PC-9 (cell line): ENCODE measurements at regions of chr2 and their contacts with region 1.

Region 1: DNA sequence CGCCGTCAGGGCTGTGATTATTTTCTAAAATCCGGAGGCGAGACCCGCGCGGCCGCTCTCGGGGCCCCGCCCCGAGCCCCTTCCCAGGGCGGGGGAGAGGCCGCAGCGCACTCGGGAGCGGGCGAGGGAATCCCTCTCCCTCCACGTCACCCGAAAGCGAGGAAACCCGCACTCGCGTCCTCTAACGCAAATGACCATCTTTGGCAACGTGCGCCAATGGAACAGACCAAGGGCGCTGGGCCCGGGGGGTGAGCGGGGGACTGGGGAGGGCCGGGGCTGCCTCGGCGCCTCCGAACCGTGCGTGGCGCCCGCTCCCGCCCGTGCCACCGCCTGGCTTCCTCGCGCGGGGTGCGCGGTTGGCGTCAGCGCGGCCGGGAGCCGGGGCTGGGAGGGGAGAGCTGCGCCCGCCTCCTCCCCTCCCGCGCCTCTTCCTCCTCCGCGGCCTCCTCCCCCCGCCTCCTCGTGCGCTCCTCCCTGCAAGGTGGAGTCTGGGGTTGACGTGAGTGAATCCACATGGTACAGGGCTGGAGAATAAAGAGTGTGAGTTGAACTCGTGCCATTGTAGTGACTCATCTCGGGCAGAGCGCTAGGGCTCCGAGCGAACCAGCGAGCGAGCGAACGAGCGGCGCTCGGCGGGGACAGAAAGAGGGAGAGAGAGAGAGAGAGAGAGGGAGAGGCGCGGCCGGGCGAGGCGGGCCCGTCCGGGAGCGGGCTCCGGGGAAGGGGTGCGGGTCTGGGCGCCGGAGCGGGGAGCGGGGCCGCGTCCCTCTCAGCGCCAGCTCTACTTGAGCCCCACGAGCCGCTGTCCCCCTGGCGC is at the start of gene FOSL2:
- DNase-seq: peak; percentile 96 to 98
- H3K4me3 ChIP-seq: peak within 1 kb of the TSS; percentile 88
- H3K27ac ChIP-seq: peak within 1 kb of the TSS; percentile 96
- H3K4me1 ChIP-seq: peaks cover 36% of the 10 kb centered on the region
- H3K27me3 ChIP-seq: no peaks in the 10 kb centered on the region
- CTCF ChIP-seq: no peak
- total RNA-seq, gene FOSL2: 46.0 and 60.0 TPM in 2 replicates

Region 2: DNA sequence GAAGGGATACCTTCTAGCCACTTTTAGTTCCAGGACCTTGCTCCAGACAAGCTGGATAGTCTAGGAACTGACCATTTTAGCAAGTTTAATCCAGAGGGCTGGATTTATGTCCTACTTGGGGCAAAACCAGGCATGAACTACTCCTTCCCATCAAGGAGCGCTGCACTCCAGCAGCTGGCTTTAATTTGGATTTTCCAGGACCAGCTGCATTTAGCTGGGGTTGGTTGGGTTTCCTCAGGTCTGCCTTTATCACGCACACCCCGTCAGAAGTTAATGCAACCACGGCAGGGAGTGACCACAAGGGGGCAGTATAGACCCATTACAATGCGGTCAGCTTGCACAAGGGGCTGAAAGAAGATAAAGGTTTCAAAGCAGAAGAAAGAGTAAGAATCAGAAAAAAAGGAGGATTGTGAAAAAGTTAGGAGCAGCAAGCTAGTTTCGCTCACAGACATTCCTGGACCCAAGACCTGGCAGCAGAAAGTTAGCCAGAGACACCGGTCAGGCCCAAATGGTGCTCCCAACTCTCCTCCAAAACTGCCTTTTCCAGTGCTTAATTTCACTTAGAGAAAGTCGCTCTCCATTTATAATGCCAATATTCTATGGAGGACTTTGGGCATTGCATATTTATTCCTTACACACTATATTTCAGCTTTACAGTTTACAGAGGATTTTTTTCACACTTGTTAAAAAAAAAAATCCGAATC is 688.7 kb before region 1 on chr2:
- CTCF ChIA-PET with region 1: interaction called, 8 read pairs
- POLR2A ChIA-PET with region 1: interaction called, 4 read pairs
- intact Hi-C with region 1: loop called (anchors 1 kb)
- DNase-seq: peak; percentile 73 to 80
- H3K4me3 ChIP-seq: no peak overlapping the region
- H3K27ac ChIP-seq: peak overlapping the region; percentile 98
- H3K4me1 ChIP-seq: peaks cover 53% of the 10 kb centered on the region
- H3K27me3 ChIP-seq: no peaks in the 10 kb centered on the region
- CTCF ChIP-seq: peak; percentile 95

Region 3: DNA sequence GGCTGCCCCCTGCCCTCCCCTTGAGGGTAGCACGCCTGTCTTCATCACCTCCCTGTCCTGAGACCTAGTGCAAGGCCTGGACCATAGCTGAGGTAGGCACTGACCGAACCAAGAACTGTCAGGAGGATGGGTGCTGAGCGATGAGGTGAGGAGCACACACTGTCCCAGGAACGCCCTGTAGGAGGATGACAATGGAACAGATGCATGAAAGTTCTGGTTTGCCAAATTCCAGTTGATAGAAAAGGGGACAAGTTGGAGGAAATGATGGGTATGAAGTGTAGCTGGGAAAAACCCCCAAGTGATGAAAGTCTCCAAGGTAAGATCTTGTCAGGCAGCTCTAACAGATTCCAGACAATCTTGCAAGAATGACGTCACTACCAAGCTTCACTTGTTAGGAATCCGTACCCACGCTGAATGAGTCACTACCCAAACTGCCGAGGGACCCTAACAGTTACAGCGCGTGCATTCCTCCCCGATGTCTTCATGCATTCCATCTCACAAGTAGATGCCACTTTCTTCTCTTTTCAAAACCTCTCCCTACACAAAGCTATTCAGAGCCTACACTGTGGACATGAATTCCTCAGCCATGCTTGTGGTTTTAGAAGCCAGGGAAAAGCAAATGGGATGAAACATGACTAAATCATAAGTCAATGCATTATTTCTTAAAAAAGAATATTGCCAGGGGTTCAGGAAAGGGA is 593.4 kb before region 1 on chr2:
- CTCF ChIA-PET with region 1: no interaction called
- POLR2A ChIA-PET with region 1: no interaction called
- intact Hi-C with region 1: loop called (anchors 1 kb)
- DNase-seq: peak; percentile 89 to 100
- H3K4me3 ChIP-seq: peak overlapping the region; percentile 3; the same call in 1 of the 2 replicates
- H3K27ac ChIP-seq: peak overlapping the region; percentile 94
- H3K4me1 ChIP-seq: peaks cover 40% of the 10 kb centered on the region
- H3K27me3 ChIP-seq: no peaks in the 10 kb centered on the region
- CTCF ChIP-seq: no peak

Region 4: DNA sequence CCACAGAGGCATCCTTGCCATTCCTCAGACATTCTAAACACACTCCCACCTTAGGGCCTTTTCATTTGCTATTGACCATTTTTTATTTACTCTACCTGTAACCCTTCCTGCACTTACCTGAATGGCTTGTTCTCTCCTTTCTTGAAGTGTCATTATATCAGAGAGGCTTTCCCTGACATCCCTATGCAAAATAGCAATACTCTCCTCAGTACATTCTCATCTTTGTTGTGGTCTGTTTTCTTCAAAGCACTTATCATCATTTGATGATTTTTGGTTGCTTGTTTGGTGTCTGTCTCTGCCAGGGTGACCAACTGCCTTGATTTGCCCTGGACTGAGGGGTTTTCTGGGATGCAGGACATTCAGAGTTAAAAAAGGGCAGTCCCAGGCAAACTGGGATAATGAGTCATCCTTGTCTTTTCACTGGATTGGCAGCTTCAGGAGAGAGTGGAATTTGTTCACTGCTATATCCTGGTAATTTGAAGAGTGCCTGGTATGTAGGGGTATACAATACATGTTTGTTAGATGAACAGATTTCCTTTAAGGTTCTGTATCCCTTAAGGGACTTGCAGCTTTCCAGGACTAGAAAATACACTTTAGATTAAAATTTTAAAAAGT is 399.6 kb before region 1 on chr2:
- CTCF ChIA-PET with region 1: no interaction called
- POLR2A ChIA-PET with region 1: no interaction called
- intact Hi-C with region 1: loop called (anchors 2 kb)
- DNase-seq: peak; percentile 35 to 86
- H3K4me3 ChIP-seq: no peak overlapping the region; the same call in 1 of the 2 replicates
- H3K27ac ChIP-seq: peak overlapping the region; percentile 75
- H3K4me1 ChIP-seq: peaks cover 35% of the 10 kb centered on the region
- H3K27me3 ChIP-seq: no peaks in the 10 kb centered on the region
- CTCF ChIP-seq: no peak

Region 5: DNA sequence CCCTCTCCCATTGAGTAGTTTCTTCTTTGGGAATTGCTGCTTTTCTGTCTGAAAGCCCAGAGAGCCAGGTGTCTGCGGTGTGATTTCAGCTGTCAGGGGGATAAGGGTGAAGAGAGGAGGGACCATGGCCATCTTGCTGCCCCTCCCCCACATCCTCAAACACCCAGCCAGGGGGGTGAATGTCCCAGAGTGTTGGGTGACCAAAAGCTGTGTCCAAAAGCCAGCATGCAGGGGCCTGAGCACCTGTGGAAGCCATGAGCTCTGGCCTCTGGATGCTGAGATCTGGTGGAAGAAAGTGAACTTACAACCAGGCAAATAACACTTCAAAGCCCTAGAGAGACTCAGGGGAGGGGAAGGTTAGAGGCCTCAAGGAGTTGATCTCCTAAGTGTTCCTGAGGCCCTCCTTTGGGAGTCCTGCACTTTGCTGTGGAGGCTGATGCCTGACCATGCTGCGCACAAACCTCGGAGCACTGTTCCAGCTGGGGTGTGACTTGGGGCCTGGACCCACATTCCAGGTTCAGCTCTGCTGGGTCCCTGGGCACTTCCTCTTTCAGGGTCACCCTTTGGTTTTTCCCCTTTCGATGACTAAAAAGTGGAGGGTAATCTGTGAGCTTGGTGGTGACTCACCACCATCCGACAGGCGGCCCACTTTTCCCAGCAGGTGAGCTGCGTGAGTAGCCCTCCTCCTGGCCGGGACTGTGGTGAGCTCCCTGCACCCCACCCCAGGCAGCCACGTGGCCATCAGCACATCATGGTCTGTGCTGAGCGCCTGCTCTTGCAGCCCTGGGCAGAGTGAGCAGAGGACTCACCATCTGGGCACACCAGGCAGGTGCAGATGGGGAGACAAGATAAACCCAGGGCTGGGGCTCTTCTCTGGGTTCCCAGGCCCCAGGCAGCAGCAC is 66.7 kb before region 1 on chr2:
- CTCF ChIA-PET with region 1: no interaction called
- POLR2A ChIA-PET with region 1: interaction called, 4 read pairs
- intact Hi-C with region 1: loop called (anchors 1 kb)
- DNase-seq: peak; percentile 86 to 95
- H3K4me3 ChIP-seq: no peak overlapping the region
- H3K27ac ChIP-seq: peak overlapping the region; percentile 78
- H3K4me1 ChIP-seq: peaks cover 41% of the 10 kb centered on the region
- H3K27me3 ChIP-seq: no peaks in the 10 kb centered on the region
- CTCF ChIP-seq: no peak; the same call in 1 of the 2 replicates

Region 6: GRCh38 chr2:28452534-28453081 is 60.1 kb after region 1 on chr2:
- CTCF ChIA-PET with region 1: no interaction called
- POLR2A ChIA-PET with region 1: no interaction called
- intact Hi-C with region 1: loop called (anchors 1 kb)
- DNase-seq: peak in 1 of 2 experiments; percentile 75
- H3K4me3 ChIP-seq: no peak overlapping the region
- H3K27ac ChIP-seq: no peak overlapping the region
- H3K4me1 ChIP-seq: peaks cover 44% of the 10 kb centered on the region
- H3K27me3 ChIP-seq: no peaks in the 10 kb centered on the region
- CTCF ChIP-seq: peak; percentile 97

Region 7: GRCh38 chr2:28751252-28751955 is 358.9 kb after region 1 on chr2 and contains the start of gene PPP1CB:
- CTCF ChIA-PET with region 1: no interaction called
- POLR2A ChIA-PET with region 1: interaction called, 14 read pairs
- intact Hi-C with region 1: no loop called
- DNase-seq: peak; percentile 84 to 96
- H3K4me3 ChIP-seq: peak within 1 kb of the TSS; percentile 93
- H3K27ac ChIP-seq: peak within 1 kb of the TSS; percentile 90
- H3K4me1 ChIP-seq: peaks cover 43% of the 10 kb centered on the region
- H3K27me3 ChIP-seq: no peaks in the 10 kb centered on the region
- CTCF ChIP-seq: no peak; the same call in 1 of the 2 replicates
- total RNA-seq, gene PPP1CB: 231 and 260 TPM in 2 replicates